HEK293T (cell line): ENCODE measurements at regions of chr1 and their contacts with region 1.

Region 1: DNA sequence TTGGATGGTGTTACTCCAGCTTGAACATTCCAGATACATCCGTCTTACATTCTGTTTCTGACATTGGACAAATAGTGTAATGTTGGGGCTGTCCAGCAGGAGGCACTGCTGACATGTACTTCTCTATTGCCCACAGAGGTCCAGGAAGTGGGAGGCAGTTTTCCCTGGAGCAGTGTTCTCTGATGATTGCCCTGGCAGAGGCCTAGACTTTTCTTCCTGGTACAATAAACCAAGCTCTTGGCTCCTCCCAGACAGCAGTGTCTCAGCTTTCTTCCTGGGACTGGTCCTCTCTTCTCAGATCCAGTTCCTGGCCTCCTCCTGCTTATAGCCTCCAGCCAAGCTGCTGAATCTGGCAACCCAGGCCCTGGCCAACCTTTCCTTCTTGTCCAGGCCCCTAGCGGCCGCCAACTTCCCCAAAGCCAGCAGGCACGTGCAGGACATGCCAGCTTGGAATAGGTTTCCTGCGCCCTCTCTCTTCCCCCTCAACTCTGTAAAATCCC is 14.9 kb upstream of the IFNLR1 start:
- DNase-seq: peak; percentile 73

Region 2: DNA sequence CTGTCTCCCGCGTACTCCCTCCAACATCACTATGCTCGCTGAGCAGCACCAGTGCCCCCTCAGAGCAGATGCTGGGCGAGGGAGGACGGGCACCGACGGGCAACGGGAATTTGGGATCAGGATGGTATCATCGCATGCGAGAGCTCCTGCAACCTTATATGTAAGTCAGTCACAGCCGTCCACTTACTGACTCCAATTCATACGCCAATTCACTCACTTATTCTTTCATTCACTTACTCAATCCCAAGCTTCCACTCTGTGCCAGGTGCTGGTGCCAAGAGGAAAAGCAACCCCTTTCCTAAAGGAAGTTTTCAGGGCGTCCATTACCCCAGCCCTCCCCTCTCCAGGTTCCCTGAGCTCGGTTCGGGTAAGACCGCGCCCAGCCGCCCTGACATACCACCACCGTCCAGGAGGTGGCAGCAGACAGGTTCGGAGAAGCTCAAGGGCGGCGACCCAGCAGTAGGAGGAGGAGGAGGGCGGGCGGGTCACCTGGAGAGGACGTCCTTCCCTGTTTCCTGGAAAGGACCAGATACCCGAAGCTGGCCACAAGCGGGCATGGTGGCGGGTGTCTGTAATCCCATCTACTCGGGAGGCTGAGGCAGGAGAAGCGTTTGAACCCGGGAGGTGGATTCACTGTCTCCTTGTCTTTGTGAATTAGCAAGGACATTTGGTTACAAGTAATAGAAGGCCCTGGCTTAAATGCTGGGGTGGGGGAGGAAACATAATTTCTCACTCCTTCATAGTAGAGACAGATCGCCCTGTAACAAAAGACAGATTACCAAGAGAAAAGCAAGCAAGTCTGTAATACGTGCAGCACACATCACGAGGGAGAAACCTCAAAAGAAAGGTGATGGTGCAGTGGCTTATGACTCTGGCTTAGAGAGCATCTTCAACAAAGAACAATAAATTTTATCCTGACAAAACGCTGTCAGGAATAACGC is 51.5 kb before region 1 on chr1:
- CTCF ChIA-PET with region 1: interaction called, 21 read pairs
- POLR2A ChIA-PET with region 1: no interaction called
- DNase-seq: peak; percentile 89

Region 3: GRCh38 chr1:24161270-24161669 is 40.7 kb before region 1 on chr1:
- CTCF ChIA-PET with region 1: no interaction called
- POLR2A ChIA-PET with region 1: no interaction called
- DNase-seq: no peak

Region 4: DNA sequence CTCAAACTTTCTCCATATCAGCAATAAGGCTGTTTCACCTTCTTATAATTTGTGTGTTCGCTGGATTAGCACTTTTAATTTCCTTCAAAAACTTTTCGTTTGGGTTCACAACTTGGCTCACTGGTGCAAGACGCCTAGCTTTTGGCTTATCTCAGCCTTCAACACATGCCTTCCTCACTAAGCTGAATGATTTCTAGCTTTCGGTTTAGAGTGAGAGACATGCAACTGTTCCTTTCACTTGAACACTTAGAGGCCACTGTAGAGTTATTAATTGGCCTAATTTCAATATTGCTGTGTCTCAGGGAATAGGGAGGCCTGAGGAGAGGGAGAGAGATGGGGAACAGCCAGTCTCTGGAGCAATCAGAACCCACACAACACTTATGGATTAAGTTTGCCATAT is 26.3 kb after region 1 on chr1:
- CTCF ChIA-PET with region 1: no interaction called
- POLR2A ChIA-PET with region 1: no interaction called
- DNase-seq: no peak